ENCODE measurements at regions of chr14 and their contacts with region 1.

Region 1: GRCh38 chr14:77028384-77029231 is at the start of gene IRF2BPL:
- DNase-seq: peak; percentile 92
- H3K4me3 ChIP-seq: peak within 1 kb of the TSS; percentile 92
- CTCF ChIP-seq: no peak

Region 2: DNA sequence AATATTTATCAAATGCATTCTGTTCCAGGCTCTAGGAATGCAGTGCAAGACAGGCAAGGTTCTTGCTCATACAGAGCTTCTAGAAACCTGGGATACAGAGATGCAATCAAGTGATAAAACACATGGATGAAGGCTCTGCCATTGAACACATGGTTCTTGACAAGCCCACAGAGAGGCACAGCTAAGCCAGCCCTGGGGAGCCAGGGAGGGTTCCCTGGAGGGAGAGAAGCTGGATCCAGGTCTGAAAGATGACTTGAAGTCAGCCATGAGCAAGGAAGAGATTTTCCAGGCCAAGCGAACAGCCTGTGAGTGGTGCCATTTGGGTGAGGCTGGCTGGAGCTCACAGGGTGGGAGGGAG is 66.3 kb before region 1 on chr14:
- CTCF ChIA-PET with region 1: interaction called, 9 read pairs
- POLR2A ChIA-PET with region 1: interaction called, 13 read pairs
- DNase-seq: no peak
- H3K4me3 ChIP-seq: peak overlapping the region; percentile 48
- CTCF ChIP-seq: no peak

Region 3: DNA sequence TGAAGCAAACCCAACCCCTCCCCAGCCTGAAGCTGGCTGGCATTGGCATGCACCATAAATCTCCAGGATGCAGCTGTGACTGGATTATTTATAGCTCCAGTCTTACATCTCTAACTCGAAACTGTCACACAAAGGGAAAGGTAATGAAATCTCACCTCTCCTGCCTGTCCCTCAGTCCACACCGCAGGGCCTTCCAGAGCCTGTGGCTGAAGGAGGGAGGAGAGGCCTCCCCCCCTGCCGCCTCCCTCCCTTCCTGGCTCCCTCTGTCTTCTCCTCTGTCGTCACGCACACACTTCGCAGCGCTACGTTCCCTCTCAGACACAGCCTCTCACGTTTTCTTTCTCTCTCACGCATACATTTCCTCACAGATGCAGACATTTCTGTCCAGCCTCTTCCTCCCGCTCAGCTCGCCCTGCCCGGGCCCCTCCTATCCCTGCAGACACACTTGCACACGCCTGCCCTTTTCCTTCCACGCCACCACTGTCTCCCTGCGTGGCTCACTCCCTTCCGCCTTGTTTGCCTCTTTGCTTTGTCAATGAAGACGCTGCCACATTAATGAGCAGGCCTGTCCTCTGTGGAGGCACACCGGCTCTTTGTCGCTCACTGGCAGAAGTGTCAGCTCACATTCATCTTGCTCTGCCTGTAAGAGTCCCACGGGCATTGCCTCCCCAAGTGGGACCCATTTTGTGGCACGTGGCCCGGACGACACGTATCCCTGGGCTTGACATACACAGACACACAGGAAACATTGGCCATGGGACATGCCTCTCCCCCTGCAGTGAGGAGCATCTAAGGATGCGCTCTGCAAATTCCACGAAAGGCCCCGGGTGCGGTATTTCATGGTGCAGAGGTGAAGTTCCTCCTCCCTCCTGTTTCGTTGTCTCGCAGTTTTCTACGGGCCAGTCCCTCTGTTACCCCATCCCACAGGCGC is 28.0 kb before region 1 on chr14:
- CTCF ChIA-PET with region 1: no interaction called
- POLR2A ChIA-PET with region 1: no interaction called
- DNase-seq: no peak
- H3K4me3 ChIP-seq: no peak overlapping the region; the same call in 1 of the 2 replicates
- CTCF ChIP-seq: no peak

Measured in AG04449 (cell line).